Activated CD4-positive, alpha-beta memory T cell treated with anti-CD3 and anti-CD28 coated beads for 36 hours (primary cell): ENCODE measurements at regions of chr10 and their contacts with region 1.

Region 1: GRCh38 chr10:14385596-14386593 is 55.2 kb upstream of the FRMD4A start:
- DNase-seq: peak; percentile 73
- H3K4me3 Mint-ChIP-seq: no peak overlapping the region
- H3K27ac Mint-ChIP-seq: no peak overlapping the region
- H3K4me1 Mint-ChIP-seq: peaks cover 62% of the 10 kb centered on the region
- H3K27me3 Mint-ChIP-seq: peaks cover 27% of the 10 kb centered on the region

Region 2: GRCh38 chr10:14009371-14010100 is 376.4 kb before region 1 on chr10:
- CTCF ChIA-PET with region 1: no interaction called
- POLR2A ChIA-PET with region 1: no interaction called
- intact Hi-C with region 1: loop called (anchors 1 kb)
- DNase-seq: peak; percentile 80
- H3K4me3 Mint-ChIP-seq: peak overlapping the region; percentile 81
- H3K27ac Mint-ChIP-seq: peak overlapping the region; percentile 79
- H3K4me1 Mint-ChIP-seq: peaks cover 27% of the 10 kb centered on the region
- H3K27me3 Mint-ChIP-seq: no peaks in the 10 kb centered on the region

Region 3: DNA sequence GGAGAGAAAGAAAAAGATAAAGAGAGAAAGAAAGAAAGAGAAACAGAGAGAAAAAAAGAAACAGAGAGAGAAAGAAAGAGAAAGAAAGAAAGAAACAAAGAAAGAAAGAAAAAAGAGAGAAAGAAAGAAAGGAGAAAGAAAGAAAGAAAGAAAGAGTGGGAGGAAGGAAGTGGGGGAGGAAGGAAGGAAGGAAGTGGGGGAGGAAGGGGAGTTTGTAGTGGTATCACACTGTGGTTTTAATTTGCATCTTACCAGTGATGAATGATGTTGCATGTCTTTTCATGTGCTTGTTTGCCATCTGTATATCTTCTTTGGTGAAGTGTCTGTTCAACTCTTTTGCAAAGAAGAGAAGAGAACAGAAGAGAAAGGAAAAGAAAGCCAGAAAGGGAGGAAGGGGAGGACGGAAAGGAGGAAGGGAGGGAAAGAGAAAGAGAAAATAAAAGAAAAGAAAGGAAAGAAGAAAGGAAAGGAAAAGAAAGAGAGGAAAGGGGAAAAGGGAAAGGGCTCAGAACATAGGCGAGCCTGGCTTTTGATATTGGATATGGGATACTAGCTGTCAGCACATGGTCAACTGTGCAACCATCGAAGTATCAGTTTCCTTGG is 24.1 kb after region 1 on chr10:
- CTCF ChIA-PET with region 1: interaction called, 3 read pairs
- POLR2A ChIA-PET with region 1: interaction called, 7 read pairs
- intact Hi-C with region 1: loop called (anchors 1 kb)
- DNase-seq: no peak
- H3K4me3 Mint-ChIP-seq: no peak overlapping the region
- H3K27ac Mint-ChIP-seq: no peak overlapping the region
- H3K4me1 Mint-ChIP-seq: peaks cover 23% of the 10 kb centered on the region
- H3K27me3 Mint-ChIP-seq: peaks cover 35% of the 10 kb centered on the region

Region 4: GRCh38 chr10:14648005-14648765 is 262.3 kb after region 1 on chr10:
- CTCF ChIA-PET with region 1: no interaction called
- POLR2A ChIA-PET with region 1: no interaction called
- intact Hi-C with region 1: loop called (anchors 1 kb)
- DNase-seq: peak; percentile 81
- H3K4me3 Mint-ChIP-seq: peak overlapping the region; percentile 75
- H3K27ac Mint-ChIP-seq: peak overlapping the region; percentile 98
- H3K4me1 Mint-ChIP-seq: peaks cover 77% of the 10 kb centered on the region
- H3K27me3 Mint-ChIP-seq: no peaks in the 10 kb centered on the region

Region 5: GRCh38 chr10:14822879-14823755 is 437.2 kb after region 1 on chr10:
- CTCF ChIA-PET with region 1: no interaction called
- POLR2A ChIA-PET with region 1: no interaction called
- intact Hi-C with region 1: loop called (anchors 5 kb)
- DNase-seq: peak; percentile 56
- H3K4me3 Mint-ChIP-seq: no peak overlapping the region
- H3K27ac Mint-ChIP-seq: no peak overlapping the region
- H3K4me1 Mint-ChIP-seq: peaks cover 2% of the 10 kb centered on the region
- H3K27me3 Mint-ChIP-seq: peaks cover 1% of the 10 kb centered on the region

Region 6: GRCh38 chr10:14959276-14960057 is 573.6 kb after region 1 on chr10 and contains the start of gene MEIG1:
- CTCF ChIA-PET with region 1: no interaction called
- POLR2A ChIA-PET with region 1: no interaction called
- intact Hi-C with region 1: loop called (anchors 10 kb)
- DNase-seq: peak; percentile 95
- H3K4me3 Mint-ChIP-seq: peak within 1 kb of the TSS; percentile 88
- H3K27ac Mint-ChIP-seq: peak within 1 kb of the TSS; percentile 95
- H3K4me1 Mint-ChIP-seq: peaks cover 24% of the 10 kb centered on the region
- H3K27me3 Mint-ChIP-seq: no peaks in the 10 kb centered on the region
- total RNA-seq, gene MEIG1: 0.95 to 1.4 TPM

Region 7: DNA sequence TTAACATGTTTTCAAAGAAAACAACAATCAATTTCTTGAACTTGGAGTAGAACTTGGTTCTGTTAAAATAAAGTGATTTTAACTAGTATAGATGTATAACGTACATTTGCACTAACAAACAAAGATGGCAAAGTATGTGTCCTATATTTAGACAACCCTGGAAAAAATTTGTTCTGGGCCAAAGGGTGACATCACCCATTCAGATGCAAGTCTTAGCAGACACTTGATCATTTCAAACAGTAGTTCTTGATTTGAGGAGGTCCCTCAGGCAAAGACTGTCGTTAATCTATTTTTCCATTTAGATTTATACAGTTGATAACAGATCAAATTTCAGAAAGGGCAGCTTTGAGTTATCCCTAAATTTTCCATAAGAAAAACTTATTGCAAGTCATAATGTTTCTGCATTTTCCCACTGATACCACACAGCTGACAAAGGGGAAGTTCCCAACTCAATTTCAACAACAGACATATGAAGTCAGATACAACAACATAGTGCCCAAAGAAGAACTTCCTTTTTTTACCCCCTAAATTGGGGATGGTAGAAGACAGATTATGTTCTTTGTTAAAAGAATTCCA is 777.4 kb after region 1 on chr10:
- CTCF ChIA-PET with region 1: no interaction called
- POLR2A ChIA-PET with region 1: no interaction called
- intact Hi-C with region 1: no loop called
- DNase-seq: no peak
- H3K4me3 Mint-ChIP-seq: no peak overlapping the region
- H3K27ac Mint-ChIP-seq: no peak overlapping the region
- H3K4me1 Mint-ChIP-seq: peaks cover 37% of the 10 kb centered on the region
- H3K27me3 Mint-ChIP-seq: no peaks in the 10 kb centered on the region